IMR-90 (cell line): ENCODE measurements at regions of chr5 and their contacts with region 1.

Region 1: GRCh38 chr5:73740274-73740790 is 114.3 kb downstream of the ARHGEF28 start:
- DNase-seq: no peak
- ATAC-seq: no peak; the same call in 1 of the 2 replicates
- H3K4me3 ChIP-seq: no peak overlapping the region
- H3K27ac ChIP-seq: no peak overlapping the region
- H3K4me1 ChIP-seq: no peaks in the 10 kb centered on the region
- H3K27me3 ChIP-seq: no peaks in the 10 kb centered on the region
- CTCF ChIP-seq: no peak
- POLR2A ChIP-seq: no peak
- RAD21 ChIP-seq: no peak

Region 2: DNA sequence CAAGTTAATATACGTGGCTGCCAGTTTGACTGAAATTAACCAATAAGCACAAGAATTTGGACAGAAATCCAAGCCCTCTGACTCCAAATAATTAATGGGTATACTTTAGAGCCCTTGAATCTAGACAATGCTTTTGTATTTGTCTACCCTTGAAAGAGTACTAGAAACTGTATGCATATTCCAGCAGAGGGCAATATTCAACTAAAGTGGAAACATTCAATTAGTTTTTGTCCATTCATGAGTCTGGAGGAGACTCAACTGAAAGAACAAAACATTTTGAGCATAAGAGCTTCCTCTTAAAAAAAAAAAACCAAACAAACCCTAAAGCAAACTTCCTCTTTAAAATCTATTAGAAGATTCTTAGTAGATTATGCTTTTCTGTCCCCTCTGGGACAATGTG is 43.5 kb after region 1 on chr5:
- CTCF ChIA-PET with region 1: no interaction called
- POLR2A ChIA-PET with region 1: no interaction called
- dilution Hi-C with region 1: no loop called
- in situ Hi-C with region 1: no loop called
- intact Hi-C with region 1: loop called (anchors 2 kb)
- DNase-seq: peak; percentile 53
- ATAC-seq: peak; percentile 65
- H3K4me3 ChIP-seq: no peak overlapping the region
- H3K27ac ChIP-seq: no peak overlapping the region
- H3K4me1 ChIP-seq: no peaks in the 10 kb centered on the region
- H3K27me3 ChIP-seq: no peaks in the 10 kb centered on the region
- CTCF ChIP-seq: peak; percentile 47
- POLR2A ChIP-seq: no peak
- RAD21 ChIP-seq: peak; percentile 35